ENCODE measurements at regions of chr5 and their contacts with region 1.

Region 1: DNA sequence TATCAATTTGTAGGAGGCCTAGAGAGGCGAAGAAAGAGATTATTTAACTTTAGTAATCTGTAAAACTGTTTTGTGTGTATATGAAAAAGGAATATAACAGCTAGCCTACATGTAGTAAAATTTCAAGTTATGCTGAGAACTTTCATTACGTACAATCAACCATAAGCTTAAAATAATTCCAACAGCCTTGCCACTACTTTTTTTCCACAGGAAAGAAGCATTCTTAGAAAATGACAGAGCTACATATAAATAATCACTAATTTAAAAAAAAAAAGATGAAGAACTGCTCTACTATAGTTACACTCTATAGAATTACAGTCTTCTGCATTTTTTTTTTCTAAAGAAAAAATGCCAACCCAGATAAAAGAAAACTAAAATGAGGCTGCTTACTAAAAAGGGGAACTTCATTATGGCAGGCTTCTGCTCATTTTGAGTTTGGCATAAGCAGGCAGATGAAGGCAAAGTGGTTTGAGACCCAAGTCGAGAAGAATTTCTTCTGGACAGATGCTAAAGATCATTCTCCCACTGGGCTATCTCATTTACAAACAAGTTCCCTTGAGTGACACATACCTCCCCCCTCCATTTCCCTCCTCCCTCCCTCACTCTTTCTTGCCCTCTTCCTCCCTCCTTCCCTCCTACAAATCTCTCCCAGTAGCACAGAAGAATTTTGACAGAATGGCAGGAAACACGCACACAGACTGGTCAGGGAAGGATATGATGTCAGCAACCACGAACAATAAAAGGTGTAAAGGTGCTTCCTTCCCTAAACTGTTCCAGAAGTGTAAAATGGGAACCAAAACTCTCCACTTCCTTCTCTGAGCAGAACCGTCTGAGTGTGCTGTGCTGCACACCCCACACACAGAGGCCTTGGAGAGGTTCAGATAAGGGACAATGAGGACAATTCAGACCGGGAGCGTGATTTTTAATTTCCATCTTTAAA is 56.1 kb downstream of the MEF2C start:
- DNase-seq: no peak
- H3K4me3 ChIP-seq: peak overlapping the region in 1 of 4 donors; percentile 4
- H3K27ac ChIP-seq: peak overlapping the region; percentile 60 to 72 (median 66)
- H3K4me1 ChIP-seq: peaks cover 31 to 61% (median 53%) of the 10 kb centered on the region in 4 donors
- H3K27me3 ChIP-seq: no peaks in the 10 kb centered on the region
- CTCF ChIP-seq: no peak
- EP300 ChIP-seq: peak; percentile 54
- POLR2A ChIP-seq: no peak

Region 2: DNA sequence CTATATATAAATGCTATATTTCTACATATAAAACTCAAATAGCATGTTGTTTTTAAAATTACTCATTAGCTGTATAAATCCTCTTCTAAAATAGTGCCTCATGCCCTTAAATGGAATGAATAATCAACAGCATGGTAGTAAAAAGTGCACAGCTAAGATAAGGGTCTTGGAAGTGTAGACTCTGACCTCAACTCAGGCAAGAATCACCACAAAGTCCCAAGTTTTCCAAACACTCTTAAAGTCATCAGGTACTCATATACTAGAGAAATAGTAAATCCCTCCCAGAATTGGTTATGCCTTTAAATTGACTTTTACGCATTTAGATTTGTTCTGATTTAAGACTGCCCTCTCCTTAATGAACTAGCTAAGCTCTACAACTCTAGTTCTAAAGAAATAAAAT is 672.0 kb before region 1 on chr5:
- intact Hi-C with region 1: no loop called
- DNase-seq: no peak
- H3K4me3 ChIP-seq: no peak overlapping the region
- H3K27ac ChIP-seq: no peak overlapping the region
- H3K4me1 ChIP-seq: no peaks in the 10 kb centered on the region
- H3K27me3 ChIP-seq: peaks cover 0 to 8% (median 0%) of the 10 kb centered on the region in 4 donors
- CTCF ChIP-seq: no peak
- EP300 ChIP-seq: no peak
- POLR2A ChIP-seq: no peak

Region 3: GRCh38 chr5:88785391-88786219 is 41.3 kb before region 1 on chr5:
- intact Hi-C with region 1: loop called (anchors 5 kb)
- DNase-seq: no peak
- H3K4me3 ChIP-seq: peak overlapping the region in 3 of 4 donors; percentile 8 to 23 (median 12)
- H3K27ac ChIP-seq: peak overlapping the region; percentile 72 to 76 (median 76)
- H3K4me1 ChIP-seq: peaks cover 25 to 28% (median 25%) of the 10 kb centered on the region in 4 donors
- H3K27me3 ChIP-seq: no peaks in the 10 kb centered on the region
- CTCF ChIP-seq: no peak
- EP300 ChIP-seq: no peak
- POLR2A ChIP-seq: no peak